MCF 10A (cell line): ENCODE measurements at regions of chr19 and their contacts with region 1.

Region 1: DNA sequence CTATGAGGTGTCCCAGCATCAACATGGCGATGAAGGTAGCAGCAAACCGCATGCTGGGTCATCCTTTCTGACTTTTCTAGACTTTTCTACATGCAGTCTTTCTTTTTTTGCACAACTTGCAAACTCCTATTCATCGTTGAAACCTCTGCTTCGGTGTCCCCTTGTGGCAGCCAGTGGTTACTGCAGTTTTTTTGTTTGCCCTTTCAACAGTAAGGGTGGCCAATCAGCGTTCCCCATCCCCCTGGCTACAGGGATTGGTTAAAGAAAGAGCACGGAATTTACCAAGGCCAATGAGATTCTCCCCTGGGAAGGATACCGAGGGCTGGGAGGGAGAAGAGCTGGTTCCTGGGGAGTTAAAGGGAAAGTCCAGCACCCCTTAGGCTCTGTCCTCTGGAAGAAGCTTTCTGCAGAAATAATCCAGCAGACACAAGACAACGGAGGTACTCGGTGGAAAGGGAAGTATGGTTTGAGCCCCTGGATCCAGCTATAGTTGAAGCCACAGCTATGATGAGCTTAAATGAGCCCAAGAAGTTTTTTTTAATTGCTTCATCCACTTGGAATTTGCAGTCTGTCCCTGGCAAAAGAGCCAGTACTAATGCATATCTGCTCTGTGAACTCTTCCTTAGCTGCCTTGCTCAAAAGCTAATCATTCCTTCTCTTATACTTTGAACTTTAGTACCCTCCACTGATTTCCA is 5.6 kb upstream of the LSM4 start:
- DNase-seq: peak; percentile 99
- H3K4me3 Mint-ChIP-seq: peak overlapping the region; percentile 67
- H3K27ac Mint-ChIP-seq: no peak overlapping the region
- H3K4me1 Mint-ChIP-seq: peaks cover 12% of the 10 kb centered on the region
- H3K27me3 Mint-ChIP-seq: no peaks in the 10 kb centered on the region
- CTCF ChIP-seq: peak; percentile 80

Region 2: GRCh38 chr19:18117692-18118378 is 210.7 kb before region 1 on chr19:
- CTCF ChIA-PET with region 1: interaction called, 14 read pairs
- POLR2A ChIA-PET with region 1: no interaction called
- intact Hi-C with region 1: loop called (anchors 10 kb)
- DNase-seq: peak; percentile 70
- H3K4me3 Mint-ChIP-seq: peak overlapping the region; percentile 77
- H3K27ac Mint-ChIP-seq: peak overlapping the region; percentile 63
- H3K4me1 Mint-ChIP-seq: peaks cover 15% of the 10 kb centered on the region
- H3K27me3 Mint-ChIP-seq: no peaks in the 10 kb centered on the region
- CTCF ChIP-seq: no peak

Region 3: DNA sequence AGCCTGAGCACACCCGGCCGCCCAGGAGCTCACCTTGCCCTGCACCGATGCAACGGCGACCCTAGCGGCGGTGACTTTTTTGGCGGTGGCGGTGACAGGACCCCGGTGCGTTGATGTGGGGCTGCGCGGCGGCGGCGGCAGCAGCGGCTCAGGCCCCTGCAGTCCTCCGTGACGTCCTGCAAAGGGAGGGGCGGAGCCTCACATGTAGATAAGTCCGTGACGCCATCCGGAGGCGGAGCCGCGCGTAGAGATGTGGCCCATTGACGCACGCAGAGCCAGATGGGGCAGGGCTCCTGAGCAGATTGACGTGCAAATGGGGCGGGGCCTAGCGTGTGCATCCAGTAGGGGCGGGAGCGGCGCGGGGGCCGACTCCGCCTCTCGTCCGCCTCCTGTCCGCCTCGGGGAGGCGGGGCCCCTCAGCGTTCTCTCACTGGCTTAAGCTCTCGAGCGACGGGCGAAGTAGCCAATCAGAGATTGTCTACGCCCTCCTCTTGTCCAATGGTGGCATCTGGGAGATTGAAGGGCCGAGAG is 124.6 kb before region 1 on chr19 and contains the start of gene RAB3A:
- CTCF ChIA-PET with region 1: interaction called, 8 read pairs
- POLR2A ChIA-PET with region 1: interaction called, 8 read pairs
- intact Hi-C with region 1: loop called (anchors 1 kb)
- DNase-seq: peak; percentile 100
- H3K4me3 Mint-ChIP-seq: peak within 1 kb of the TSS; percentile 95
- H3K27ac Mint-ChIP-seq: peak within 1 kb of the TSS; percentile 95
- H3K4me1 Mint-ChIP-seq: peaks cover 5% of the 10 kb centered on the region
- H3K27me3 Mint-ChIP-seq: no peaks in the 10 kb centered on the region
- CTCF ChIP-seq: no peak
- total RNA-seq, gene RAB3A: 0.68 and 0.81 TPM in 2 replicates

Region 4: GRCh38 chr19:18291590-18292461 is 36.7 kb before region 1 on chr19:
- CTCF ChIA-PET with region 1: interaction called, 15 read pairs
- POLR2A ChIA-PET with region 1: interaction called, 7 read pairs
- intact Hi-C with region 1: no loop called
- DNase-seq: peak; percentile 70
- H3K4me3 Mint-ChIP-seq: peak overlapping the region; percentile 78
- H3K27ac Mint-ChIP-seq: peak overlapping the region; percentile 97
- H3K4me1 Mint-ChIP-seq: peaks cover 19% of the 10 kb centered on the region
- H3K27me3 Mint-ChIP-seq: no peaks in the 10 kb centered on the region
- CTCF ChIP-seq: no peak

Region 5: DNA sequence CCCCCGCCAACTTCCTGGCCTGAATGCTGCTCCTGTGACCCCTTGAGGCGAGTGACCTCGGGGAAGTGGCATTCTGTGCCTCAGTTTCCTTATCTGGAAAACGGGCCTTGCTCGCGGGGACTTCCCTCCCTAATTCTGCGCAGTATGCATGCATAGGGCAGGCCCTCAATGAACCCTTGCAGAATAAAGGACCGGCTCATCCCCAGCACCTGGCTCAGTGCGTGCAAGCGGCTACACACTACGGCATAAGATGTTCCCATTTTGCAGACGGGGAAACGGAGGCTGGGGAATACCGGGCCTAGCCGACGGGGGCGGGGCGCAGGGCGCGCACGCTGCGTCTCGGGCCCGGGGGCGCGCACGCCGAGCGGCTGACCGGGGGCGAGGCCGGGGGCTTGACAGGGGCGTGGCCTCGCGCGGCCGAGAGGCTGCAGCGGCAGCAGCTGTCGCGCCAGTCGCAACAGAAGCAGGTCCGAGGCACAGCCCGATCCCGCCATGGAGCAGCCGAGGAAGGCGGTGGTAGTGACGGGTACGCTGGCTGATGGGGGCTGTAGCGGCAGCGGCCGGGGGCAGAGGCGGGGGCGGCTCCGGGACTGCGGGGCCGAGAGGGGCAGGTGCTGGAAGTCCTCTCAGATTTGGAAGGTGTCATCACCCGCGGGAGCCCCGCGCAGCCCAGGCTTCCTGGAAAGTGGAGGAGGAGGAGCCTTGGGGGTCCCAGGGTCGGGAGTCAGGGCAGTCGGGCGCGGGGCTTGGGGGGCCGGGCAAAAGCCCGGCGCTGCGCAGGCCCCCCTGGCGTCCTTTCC is 11.9 kb after region 1 on chr19 and contains the start of gene PGPEP1:
- CTCF ChIA-PET with region 1: interaction called, 26 read pairs
- POLR2A ChIA-PET with region 1: interaction called, 20 read pairs
- intact Hi-C with region 1: no loop called
- DNase-seq: no peak
- H3K4me3 Mint-ChIP-seq: peak within 1 kb of the TSS; percentile 58
- H3K27ac Mint-ChIP-seq: no peak within 1 kb of the TSS
- H3K4me1 Mint-ChIP-seq: peaks cover 11% of the 10 kb centered on the region
- H3K27me3 Mint-ChIP-seq: no peaks in the 10 kb centered on the region
- CTCF ChIP-seq: no peak
- total RNA-seq, gene PGPEP1: 6.5 and 11.9 TPM in 2 replicates

Region 6: GRCh38 chr19:18419195-18419698 is 90.8 kb after region 1 on chr19 and contains the start of gene SSBP4:
- CTCF ChIA-PET with region 1: interaction called, 24 read pairs
- POLR2A ChIA-PET with region 1: interaction called, 5 read pairs
- intact Hi-C with region 1: no loop called
- DNase-seq: peak; percentile 80
- H3K4me3 Mint-ChIP-seq: peak within 1 kb of the TSS; percentile 77
- H3K27ac Mint-ChIP-seq: peak within 1 kb of the TSS; percentile 72
- H3K4me1 Mint-ChIP-seq: peaks cover 29% of the 10 kb centered on the region
- H3K27me3 Mint-ChIP-seq: no peaks in the 10 kb centered on the region
- CTCF ChIP-seq: peak; percentile 51
- total RNA-seq, gene SSBP4: 22.3 and 26.3 TPM in 2 replicates